ENCODE measurements at regions of chr7 and their contacts with region 1.

Region 1: GRCh38 chr7:2109936-2110585 is 122.7 kb downstream of the MAD1L1 start:
- DNase-seq: peak; percentile 86
- H3K4me3 ChIP-seq: peak overlapping the region in 1 of 3 experiments; percentile 14
- H3K27ac ChIP-seq: peak overlapping the region; percentile 72
- H3K4me1 ChIP-seq: peaks cover 44% of the 10 kb centered on the region
- H3K27me3 ChIP-seq: no peaks in the 10 kb centered on the region
- CTCF ChIP-seq: no peak
- POLR2A ChIP-seq: peak; percentile 31

Region 2: DNA sequence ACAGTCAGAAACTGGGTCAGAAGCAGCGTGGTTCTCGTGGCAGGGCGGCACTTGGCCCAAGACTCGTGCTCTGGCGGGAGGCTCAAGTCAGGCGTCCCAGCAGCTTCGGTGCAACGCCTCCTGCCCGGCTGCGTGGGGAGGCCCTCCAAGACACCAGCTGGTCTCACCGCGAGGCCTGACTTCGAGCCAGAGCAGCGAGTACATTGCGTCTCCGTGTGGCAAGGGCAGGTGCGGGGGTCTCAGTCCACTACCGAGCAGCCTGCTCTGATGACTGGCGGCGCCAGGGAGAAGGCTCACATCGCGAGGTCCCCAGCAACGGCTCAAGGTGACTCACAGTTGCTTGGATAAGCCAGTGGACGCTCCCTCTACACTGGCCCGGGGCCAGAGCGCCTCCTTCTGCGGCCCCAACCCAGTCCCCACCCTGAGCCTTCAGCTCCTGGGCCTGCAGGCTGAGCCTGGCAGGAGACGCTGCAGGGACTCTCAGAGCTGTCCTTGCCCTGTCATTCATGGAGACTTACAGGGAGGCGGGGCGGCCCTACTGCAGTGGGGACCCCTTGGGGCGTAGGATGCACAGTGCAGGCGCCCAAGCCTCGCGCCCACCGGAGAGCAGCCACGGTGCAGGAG is 1341.1 kb before region 1 on chr7:
- CTCF ChIA-PET with region 1: no interaction called
- POLR2A ChIA-PET with region 1: no interaction called
- dilution Hi-C with region 1: no loop called
- intact Hi-C with region 1: no loop called
- DNase-seq: no peak
- H3K4me3 ChIP-seq: no peak overlapping the region
- H3K27ac ChIP-seq: no peak overlapping the region
- H3K4me1 ChIP-seq: peaks cover 10% of the 10 kb centered on the region
- H3K27me3 ChIP-seq: no peaks in the 10 kb centered on the region
- CTCF ChIP-seq: no peak
- POLR2A ChIP-seq: no peak

Region 3: GRCh38 chr7:2157468-2158279 is 47.6 kb after region 1 on chr7:
- CTCF ChIA-PET with region 1: no interaction called
- POLR2A ChIA-PET with region 1: no interaction called
- dilution Hi-C with region 1: no loop called
- intact Hi-C with region 1: loop called (anchors 5 kb)
- DNase-seq: peak; percentile 31
- H3K4me3 ChIP-seq: no peak overlapping the region
- H3K27ac ChIP-seq: no peak overlapping the region
- H3K4me1 ChIP-seq: no peaks in the 10 kb centered on the region
- H3K27me3 ChIP-seq: no peaks in the 10 kb centered on the region
- CTCF ChIP-seq: no peak
- POLR2A ChIP-seq: no peak